ENCODE measurements at regions of chr9 and their contacts with region 1.

Region 1: GRCh38 chr9:27094640-27095298 is 14.3 kb upstream of the TEK start:
- DNase-seq: no peak
- H3K4me3 ChIP-seq: no peak overlapping the region
- H3K27ac ChIP-seq: no peak overlapping the region
- H3K4me1 ChIP-seq: peaks cover 0 to 4% (median 0%) of the 10 kb centered on the region in 4 donors
- H3K27me3 ChIP-seq: no peaks in the 10 kb centered on the region
- CTCF ChIP-seq: no peak
- EP300 ChIP-seq: no peak
- POLR2A ChIP-seq: no peak

Region 2: DNA sequence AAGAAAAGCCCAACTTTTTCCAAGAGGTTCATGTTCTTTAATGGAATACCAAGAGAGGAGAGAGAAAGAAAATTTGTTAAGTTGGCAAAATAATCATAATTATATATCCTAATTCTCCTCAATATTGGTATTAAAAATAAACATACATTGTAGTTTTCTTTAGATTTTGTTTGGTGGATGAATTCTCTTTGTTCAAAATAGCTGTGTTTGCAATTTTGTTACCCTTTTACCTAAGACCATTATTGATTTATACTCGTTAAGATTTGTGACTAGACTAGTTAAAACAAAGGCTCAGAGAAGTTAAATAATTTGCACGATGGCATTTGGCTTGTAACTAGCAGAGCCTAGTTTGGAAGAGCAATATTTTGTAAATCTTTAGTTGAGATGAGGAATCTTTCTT is 99.0 kb before region 1 on chr9:
- in situ Hi-C with region 1: no loop called
- intact Hi-C with region 1: no loop called
- DNase-seq: no peak
- H3K4me3 ChIP-seq: no peak overlapping the region
- H3K27ac ChIP-seq: no peak overlapping the region
- H3K4me1 ChIP-seq: no peaks in the 10 kb centered on the region
- H3K27me3 ChIP-seq: no peaks in the 10 kb centered on the region
- CTCF ChIP-seq: no peak
- EP300 ChIP-seq: no peak
- POLR2A ChIP-seq: no peak

Region 3: GRCh38 chr9:27047136-27047535 is 47.6 kb before region 1 on chr9:
- in situ Hi-C with region 1: no loop called
- intact Hi-C with region 1: no loop called
- DNase-seq: no peak
- H3K4me3 ChIP-seq: no peak overlapping the region
- H3K27ac ChIP-seq: no peak overlapping the region
- H3K4me1 ChIP-seq: no peaks in the 10 kb centered on the region
- H3K27me3 ChIP-seq: no peaks in the 10 kb centered on the region
- CTCF ChIP-seq: no peak
- EP300 ChIP-seq: no peak
- POLR2A ChIP-seq: no peak

Region 4: DNA sequence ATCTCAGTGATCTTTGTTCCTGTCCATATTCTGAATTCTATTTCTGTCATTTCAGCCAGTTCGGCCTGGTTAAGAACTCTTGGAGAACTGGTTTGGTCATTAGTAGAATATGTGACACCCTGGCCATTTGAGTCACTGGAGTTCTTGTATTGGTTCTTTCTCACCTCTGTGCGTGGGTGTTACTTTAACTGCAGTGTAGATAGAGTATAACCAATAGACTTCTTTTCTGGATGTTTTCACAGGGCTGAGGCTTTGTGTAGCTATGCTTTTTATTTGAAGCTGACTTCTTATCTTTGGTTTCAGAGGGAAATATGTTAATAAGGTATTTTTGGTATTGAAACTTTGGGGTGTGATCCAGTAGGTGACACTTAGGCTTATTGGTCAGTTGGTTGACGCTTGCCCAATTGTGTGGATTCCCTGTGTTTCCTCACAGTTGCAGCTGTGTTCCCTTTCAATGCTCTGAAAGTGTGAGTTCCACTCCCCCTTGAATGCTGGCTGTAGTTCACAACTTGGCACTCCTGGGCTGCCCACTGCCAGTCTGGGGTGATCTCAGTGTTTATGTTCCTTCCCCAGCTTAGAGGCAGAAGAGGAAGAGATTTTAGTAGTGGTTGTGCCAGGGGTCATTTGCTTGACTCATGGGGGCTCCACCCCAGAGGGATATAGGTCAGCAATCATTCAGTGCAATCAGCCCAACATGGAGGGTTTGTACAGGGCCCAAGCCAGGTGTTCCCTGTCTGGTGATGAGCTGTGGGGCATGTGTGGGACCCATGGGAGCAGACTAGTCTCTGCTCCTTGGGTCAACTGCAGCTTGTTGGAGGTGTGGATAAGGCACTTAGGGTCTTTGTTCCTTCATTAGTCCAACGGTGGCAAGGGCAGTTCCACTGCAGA is 20.7 kb before region 1 on chr9:
- in situ Hi-C with region 1: no loop called
- intact Hi-C with region 1: loop called (anchors 2 kb)
- DNase-seq: no peak
- H3K4me3 ChIP-seq: no peak overlapping the region
- H3K27ac ChIP-seq: no peak overlapping the region
- H3K4me1 ChIP-seq: no peaks in the 10 kb centered on the region
- H3K27me3 ChIP-seq: no peaks in the 10 kb centered on the region
- CTCF ChIP-seq: no peak
- EP300 ChIP-seq: no peak
- POLR2A ChIP-seq: no peak